Activated CD4-positive, alpha-beta memory T cell treated with anti-CD3 and anti-CD28 coated beads for 36 hours (primary cell): ENCODE measurements at regions of chr2 and their contacts with region 1.

Region 1: GRCh38 chr2:212928681-212929080 is 222.7 kb downstream of the IKZF2 start:
- DNase-seq: no peak
- H3K4me3 Mint-ChIP-seq: no peak overlapping the region
- H3K27ac Mint-ChIP-seq: no peak overlapping the region
- H3K4me1 Mint-ChIP-seq: peaks cover 6% of the 10 kb centered on the region
- H3K27me3 Mint-ChIP-seq: no peaks in the 10 kb centered on the region

Region 2: GRCh38 chr2:212957624-212958532 is 29.2 kb after region 1 on chr2:
- CTCF ChIA-PET with region 1: no interaction called
- POLR2A ChIA-PET with region 1: no interaction called
- intact Hi-C with region 1: loop called (anchors 1 kb)
- DNase-seq: no peak
- H3K4me3 Mint-ChIP-seq: peak overlapping the region; percentile 7
- H3K27ac Mint-ChIP-seq: peak overlapping the region; percentile 53
- H3K4me1 Mint-ChIP-seq: peaks cover 26% of the 10 kb centered on the region
- H3K27me3 Mint-ChIP-seq: no peaks in the 10 kb centered on the region

Region 3: GRCh38 chr2:213036836-213037235 is 108.2 kb after region 1 on chr2:
- CTCF ChIA-PET with region 1: no interaction called
- POLR2A ChIA-PET with region 1: no interaction called
- intact Hi-C with region 1: no loop called
- DNase-seq: no peak
- H3K4me3 Mint-ChIP-seq: no peak overlapping the region
- H3K27ac Mint-ChIP-seq: no peak overlapping the region
- H3K4me1 Mint-ChIP-seq: peaks cover 19% of the 10 kb centered on the region
- H3K27me3 Mint-ChIP-seq: no peaks in the 10 kb centered on the region